Motor neuron (in vitro differentiated cells): ENCODE measurements at regions of chr1 and their contacts with region 1.

Region 1: DNA sequence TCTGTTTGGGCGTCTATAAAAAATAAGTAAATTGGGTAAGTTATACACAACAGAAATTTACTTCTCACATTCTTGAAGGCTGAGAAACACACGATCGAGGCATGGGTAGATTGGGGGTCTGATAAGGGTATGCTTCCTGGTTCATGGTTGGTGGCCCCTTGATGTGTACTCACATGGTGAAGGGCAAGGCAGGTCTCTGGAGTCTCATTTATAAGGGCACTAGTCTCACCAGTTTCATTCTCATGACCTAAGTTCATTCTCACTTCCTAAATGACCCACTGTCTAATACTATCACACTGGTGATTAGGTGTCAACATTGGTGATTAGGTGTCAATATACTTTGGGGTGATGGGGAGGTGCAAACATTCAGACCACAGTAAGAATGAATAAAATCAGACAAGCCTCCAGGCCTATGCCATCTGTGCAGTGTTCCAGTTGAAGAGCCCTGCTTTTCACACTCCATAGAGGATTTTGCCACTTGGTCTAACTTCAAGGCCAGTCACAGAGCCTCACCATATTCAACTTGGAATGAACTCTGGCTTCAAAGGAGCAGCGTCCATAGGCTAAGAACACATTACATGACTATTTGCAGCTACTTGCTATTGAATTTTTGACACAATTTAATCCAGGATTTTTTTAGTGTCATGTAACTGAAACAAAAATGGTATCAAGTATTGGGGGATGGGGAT is 2.5 kb upstream of the GBP4 start:
- ATAC-seq: no peak
- H3K4me3 ChIP-seq: no peak overlapping the region
- H3K27ac ChIP-seq: no peak overlapping the region
- H3K4me1 ChIP-seq: no peaks in the 10 kb centered on the region

Region 2: DNA sequence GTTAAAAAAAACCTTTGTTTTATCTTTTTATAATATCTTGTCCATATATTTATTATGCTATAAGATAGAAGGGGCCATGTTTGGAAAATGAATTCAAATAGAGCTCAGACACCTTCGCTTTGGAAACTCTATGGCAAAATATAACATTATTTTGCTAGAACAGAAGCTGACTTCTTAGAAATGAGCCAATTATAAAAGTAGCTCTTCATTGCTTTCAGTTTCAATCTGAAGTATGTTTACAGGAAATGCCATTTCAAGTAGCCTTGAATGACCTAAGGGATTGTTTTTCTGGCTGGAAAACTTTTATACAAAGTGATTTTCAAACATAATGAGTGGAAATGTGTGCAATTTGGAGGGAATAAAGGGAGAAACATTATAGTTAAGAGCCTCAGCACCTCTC is 109.3 kb after region 1 on chr1:
- in situ Hi-C with region 1: loop called in 1 of 9 experiments (anchors 25 kb)
- ATAC-seq: peak in 2 of 8 experiments; percentile 50 to 57
- H3K4me3 ChIP-seq: no peak overlapping the region
- H3K27ac ChIP-seq: no peak overlapping the region
- H3K4me1 ChIP-seq: no peaks in the 10 kb centered on the region

Region 3: GRCh38 chr1:89454845-89455521 is 253.7 kb after region 1 on chr1:
- in situ Hi-C with region 1: no loop called
- ATAC-seq: peak; percentile 56 to 90 (median 81)
- H3K4me3 ChIP-seq: no peak overlapping the region
- H3K27ac ChIP-seq: no peak overlapping the region
- H3K4me1 ChIP-seq: peaks cover 0 to 3% of the 10 kb centered on the region in 2 donors

Region 4: GRCh38 chr1:90996742-90997413 is 1795.6 kb after region 1 on chr1:
- in situ Hi-C with region 1: no loop called
- ATAC-seq: no peak
- H3K4me3 ChIP-seq: no peak overlapping the region
- H3K27ac ChIP-seq: no peak overlapping the region
- H3K4me1 ChIP-seq: peaks cover 0 to 5% of the 10 kb centered on the region in 2 donors